Activated CD4-positive, alpha-beta T cell treated with anti-CD3 and anti-CD28 coated beads for 36 hours (primary cell): ENCODE measurements at regions of chr9 and their contacts with region 1.

Region 1: GRCh38 chr9:33024966-33025571 is at the start of gene DNAJA1:
- DNase-seq: peak; percentile 97
- ATAC-seq: peak; percentile 82
- H3K4me3 Mint-ChIP-seq: peak within 1 kb of the TSS; percentile 98
- H3K27ac Mint-ChIP-seq: peak within 1 kb of the TSS; percentile 94
- H3K4me1 Mint-ChIP-seq: peaks cover 59% of the 10 kb centered on the region
- H3K27me3 Mint-ChIP-seq: no peaks in the 10 kb centered on the region
- total RNA-seq, gene DNAJA1: 198 to 266 TPM

Region 2: DNA sequence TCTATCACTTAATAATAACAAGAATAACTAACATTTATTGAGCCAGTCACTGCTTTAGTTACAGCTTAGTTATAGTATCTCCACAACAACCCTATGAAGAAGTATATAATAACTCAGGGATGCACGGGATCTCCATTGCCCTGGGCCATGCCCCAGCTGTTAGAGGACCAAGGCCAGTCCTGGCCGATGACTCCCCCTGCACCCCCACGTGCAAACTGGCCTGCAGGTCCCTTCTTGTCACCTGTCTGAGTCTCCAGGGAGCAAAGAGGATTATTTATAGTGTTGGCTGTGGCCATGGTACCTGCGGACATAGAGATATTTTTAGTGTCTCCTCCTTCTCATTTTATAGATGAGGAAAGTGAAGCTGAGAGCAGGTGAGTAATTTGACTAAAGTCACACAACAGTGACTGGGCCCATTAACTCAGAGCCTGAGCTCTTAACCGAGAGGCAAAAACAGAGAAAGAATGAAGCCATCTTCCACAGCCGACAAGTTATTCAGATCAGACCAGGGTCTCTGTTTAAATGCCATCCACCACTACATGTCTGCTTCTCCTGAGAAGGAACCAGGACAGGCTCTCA is 147.3 kb before region 1 on chr9:
- CTCF ChIA-PET with region 1: no interaction called
- POLR2A ChIA-PET with region 1: no interaction called
- intact Hi-C with region 1: no loop called
- DNase-seq: no peak
- ATAC-seq: no peak
- H3K4me3 Mint-ChIP-seq: no peak overlapping the region
- H3K27ac Mint-ChIP-seq: no peak overlapping the region
- H3K4me1 Mint-ChIP-seq: no peaks in the 10 kb centered on the region
- H3K27me3 Mint-ChIP-seq: no peaks in the 10 kb centered on the region

Region 3: DNA sequence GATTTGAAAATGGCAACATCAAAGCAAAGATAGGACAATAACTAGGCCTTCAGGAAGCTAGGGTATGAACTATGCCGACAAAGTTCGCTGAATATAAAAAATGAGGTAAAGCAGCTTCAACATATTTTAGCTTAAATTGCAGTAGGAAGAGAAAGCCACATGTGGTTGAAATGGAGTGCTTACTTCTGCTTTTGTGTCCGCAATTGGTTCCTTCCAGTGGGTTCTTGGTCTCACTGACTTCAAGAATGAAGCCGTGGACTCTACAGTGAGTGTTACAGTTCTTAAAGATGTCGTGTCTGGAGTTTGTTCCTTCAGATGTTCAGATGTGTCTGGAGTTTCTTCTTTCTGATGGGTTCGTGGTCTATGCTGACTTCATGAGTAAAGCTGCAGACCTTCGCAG is 118.9 kb before region 1 on chr9:
- CTCF ChIA-PET with region 1: no interaction called
- POLR2A ChIA-PET with region 1: no interaction called
- intact Hi-C with region 1: no loop called
- DNase-seq: no peak
- ATAC-seq: no peak
- H3K4me3 Mint-ChIP-seq: no peak overlapping the region
- H3K27ac Mint-ChIP-seq: no peak overlapping the region
- H3K4me1 Mint-ChIP-seq: no peaks in the 10 kb centered on the region
- H3K27me3 Mint-ChIP-seq: peaks cover 11% of the 10 kb centered on the region

Region 4: GRCh38 chr9:32978051-32978450 is 47.0 kb before region 1 on chr9:
- CTCF ChIA-PET with region 1: no interaction called
- POLR2A ChIA-PET with region 1: no interaction called
- intact Hi-C with region 1: no loop called
- DNase-seq: no peak
- ATAC-seq: no peak
- H3K4me3 Mint-ChIP-seq: no peak overlapping the region
- H3K27ac Mint-ChIP-seq: no peak overlapping the region
- H3K4me1 Mint-ChIP-seq: no peaks in the 10 kb centered on the region
- H3K27me3 Mint-ChIP-seq: no peaks in the 10 kb centered on the region

Region 5: GRCh38 chr9:33007755-33008154 is 17.3 kb before region 1 on chr9:
- CTCF ChIA-PET with region 1: interaction called, 8 read pairs
- POLR2A ChIA-PET with region 1: interaction called, 36 read pairs
- intact Hi-C with region 1: no loop called
- DNase-seq: no peak
- ATAC-seq: no peak
- H3K4me3 Mint-ChIP-seq: no peak overlapping the region
- H3K27ac Mint-ChIP-seq: no peak overlapping the region
- H3K4me1 Mint-ChIP-seq: peaks cover under 1% of the 10 kb centered on the region
- H3K27me3 Mint-ChIP-seq: no peaks in the 10 kb centered on the region

Region 6: GRCh38 chr9:33264473-33265177 is 239.6 kb after region 1 on chr9 and contains the starts of genes BAG1 and CHMP5:
- CTCF ChIA-PET with region 1: no interaction called
- POLR2A ChIA-PET with region 1: interaction called, 10 read pairs
- intact Hi-C with region 1: loop called (anchors 1 kb)
- DNase-seq: peak; percentile 100
- ATAC-seq: peak; percentile 96
- H3K4me3 Mint-ChIP-seq: peak within 1 kb of the TSS; percentile 97
- H3K27ac Mint-ChIP-seq: peak within 1 kb of the TSS; percentile 99
- H3K4me1 Mint-ChIP-seq: peaks cover 51% of the 10 kb centered on the region
- H3K27me3 Mint-ChIP-seq: no peaks in the 10 kb centered on the region
- total RNA-seq, gene BAG1: 47.9 to 65.8 TPM
- total RNA-seq, gene CHMP5: 102 to 106 TPM